Spleen (tissue), 13 donors: ENCODE measurements at regions of chr17 and their contacts with region 1.

Region 1: DNA sequence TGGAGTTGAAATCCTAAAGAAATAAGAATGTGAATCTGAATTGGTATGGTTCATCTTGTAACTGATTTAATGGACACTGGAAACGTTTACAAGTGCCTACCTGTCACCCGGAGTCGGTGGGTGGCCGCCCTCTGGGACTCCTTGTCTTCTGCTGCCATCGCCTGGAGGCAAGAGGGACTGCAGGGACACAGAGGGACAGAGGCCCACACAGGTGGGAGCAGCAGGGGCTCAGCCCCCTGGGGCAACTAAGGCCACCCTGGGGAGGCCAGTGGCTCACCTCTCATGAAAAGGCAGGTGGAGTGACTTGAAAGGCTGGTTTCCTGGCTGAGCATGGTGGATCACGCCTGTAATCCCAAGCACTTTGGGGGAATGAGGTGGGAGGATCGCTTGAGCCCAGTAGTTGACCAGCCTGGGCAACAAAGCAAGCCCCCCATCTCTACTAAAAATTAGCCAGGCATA is 23.2 kb downstream of the TMEM92 start:
- DNase-seq: peak; percentile 94
- H3K4me3 ChIP-seq: no peak overlapping the region
- H3K27ac ChIP-seq: no peak overlapping the region
- H3K4me1 ChIP-seq: peaks cover 0 to 11% (median 0%) of the 10 kb centered on the region in 6 donors
- H3K27me3 ChIP-seq: no peaks in the 10 kb centered on the region
- CTCF ChIP-seq: peak; percentile 87 to 95 (median 93)
- POLR2A ChIP-seq: no peak

Region 2: GRCh38 chr17:50114849-50115357 is 182.5 kb before region 1 on chr17:
- intact Hi-C with region 1: loop called (anchors 10 kb)
- DNase-seq: no peak
- H3K4me3 ChIP-seq: no peak overlapping the region
- H3K27ac ChIP-seq: no peak overlapping the region
- H3K4me1 ChIP-seq: peaks cover 9 to 61% (median 33%) of the 10 kb centered on the region in 6 donors
- H3K27me3 ChIP-seq: peaks cover 0 to 57% (median 12%) of the 10 kb centered on the region in 7 donors
- CTCF ChIP-seq: peak in 9 of 11 experiments; percentile 13 to 65 (median 47)
- POLR2A ChIP-seq: no peak

Region 3: GRCh38 chr17:50200457-50201275 is 96.8 kb before region 1 on chr17:
- intact Hi-C with region 1: loop called (anchors 5 kb)
- DNase-seq: peak; percentile 96
- H3K4me3 ChIP-seq: peak overlapping the region; percentile 23 to 73 (median 44)
- H3K27ac ChIP-seq: peak overlapping the region in 7 of 8 donors; percentile 70 to 84 (median 77)
- H3K4me1 ChIP-seq: peaks cover 0 to 61% (median 30%) of the 10 kb centered on the region in 6 donors
- H3K27me3 ChIP-seq: peaks cover 0 to 77% (median 32%) of the 10 kb centered on the region in 7 donors
- CTCF ChIP-seq: peak; percentile 98 to 100 (median 100)
- POLR2A ChIP-seq: no peak

Region 4: DNA sequence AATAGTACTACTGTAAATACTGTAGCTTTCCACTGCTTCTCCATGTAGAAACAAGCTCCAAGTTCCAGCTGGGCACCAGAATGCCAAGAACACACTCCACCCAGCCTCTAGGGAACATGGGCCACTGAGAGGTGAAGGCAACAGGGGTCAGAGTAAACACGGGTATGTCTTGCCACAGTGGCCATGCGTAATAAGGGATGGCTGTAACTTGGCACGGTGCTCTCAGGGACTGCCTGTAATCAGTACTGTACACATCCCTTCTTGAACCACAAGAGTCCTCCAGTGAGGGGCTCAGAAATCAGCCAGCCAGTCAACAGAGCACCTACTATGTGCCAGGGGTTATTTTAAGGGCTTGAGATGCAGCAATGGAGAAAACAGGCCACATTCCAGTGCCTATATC is 89.1 kb after region 1 on chr17:
- intact Hi-C with region 1: no loop called
- DNase-seq: no peak
- H3K4me3 ChIP-seq: no peak overlapping the region
- H3K27ac ChIP-seq: no peak overlapping the region
- H3K4me1 ChIP-seq: peaks cover 0 to 12% (median 0%) of the 10 kb centered on the region in 6 donors
- H3K27me3 ChIP-seq: no peaks in the 10 kb centered on the region
- CTCF ChIP-seq: no peak
- POLR2A ChIP-seq: no peak